Naive thymus-derived CD4-positive, alpha-beta T cell (primary cell): ENCODE measurements at regions of chr2 and their contacts with region 1.

Region 1: DNA sequence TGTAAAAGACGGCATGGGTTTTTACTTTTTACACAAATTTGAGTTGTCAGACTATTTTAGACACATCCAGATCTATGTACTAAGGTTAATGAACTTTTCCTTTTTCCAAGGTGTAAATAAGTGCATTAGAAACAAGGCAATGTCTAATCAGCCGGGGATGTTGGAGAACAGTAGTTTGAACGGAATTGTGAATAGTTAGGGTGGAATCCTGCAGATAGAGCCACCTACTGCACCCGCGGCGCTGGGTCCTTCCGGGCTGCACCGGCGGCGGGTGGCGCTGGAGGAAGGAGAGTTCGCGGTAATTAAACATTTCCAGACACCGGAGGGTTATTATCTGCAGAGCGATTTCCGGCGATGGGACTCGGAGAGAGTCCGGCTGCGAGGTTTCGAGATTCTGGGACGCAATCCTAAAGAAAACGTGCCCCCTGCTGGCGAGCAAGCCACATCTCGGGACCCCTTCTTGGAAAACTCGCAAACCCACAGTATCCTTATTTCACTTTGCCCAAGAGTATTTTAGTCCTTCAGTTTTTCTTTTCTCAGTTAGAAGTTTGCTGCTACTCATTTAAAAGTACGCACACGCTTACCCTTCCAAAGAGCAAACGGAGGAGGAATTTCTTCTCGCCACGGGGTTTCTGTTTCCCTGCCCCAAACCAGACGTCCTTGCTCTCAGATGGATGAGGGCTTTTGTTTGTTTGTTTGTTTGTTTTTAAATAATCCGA is 4.5 kb upstream of the OSR1 start:
- DNase-seq: peak in 3 of 9 donors; percentile 41 to 46 (median 44)
- ATAC-seq: peak; percentile 38
- H3K4me3 ChIP-seq: peak overlapping the region; percentile 79
- H3K4me3 Mint-ChIP-seq: peak overlapping the region; percentile 88 to 99 (median 94)
- H3K27ac ChIP-seq: no peak overlapping the region
- H3K27ac Mint-ChIP-seq: peak overlapping the region in 8 of 9 donors; percentile 40 to 90 (median 80)
- H3K4me1 ChIP-seq: peaks cover 7 to 20% of the 10 kb centered on the region in 2 donors
- H3K4me1 Mint-ChIP-seq: peaks cover 19 to 40% (median 35%) of the 10 kb centered on the region in 7 donors
- H3K27me3 ChIP-seq: peaks cover 19 to 30% of the 10 kb centered on the region in 2 donors
- H3K27me3 Mint-ChIP-seq: peaks cover 39 to 97% (median 43%) of the 10 kb centered on the region in 5 donors

Region 2: GRCh38 chr2:18520451-18521425 is 842.2 kb before region 1 on chr2:
- CTCF ChIA-PET with region 1: no interaction called
- POLR2A ChIA-PET with region 1: no interaction called
- intact Hi-C with region 1: loop called (anchors 1 kb)
- DNase-seq: peak; percentile 39 to 72 (median 65)
- ATAC-seq: peak; percentile 78
- H3K4me3 ChIP-seq: no peak overlapping the region
- H3K4me3 Mint-ChIP-seq: no peak overlapping the region
- H3K27ac ChIP-seq: no peak overlapping the region
- H3K27ac Mint-ChIP-seq: no peak overlapping the region
- H3K4me1 ChIP-seq: no peaks in the 10 kb centered on the region
- H3K4me1 Mint-ChIP-seq: no peaks in the 10 kb centered on the region
- H3K27me3 ChIP-seq: no peaks in the 10 kb centered on the region
- H3K27me3 Mint-ChIP-seq: peaks cover 9 to 19% (median 17%) of the 10 kb centered on the region in 5 donors

Region 3: DNA sequence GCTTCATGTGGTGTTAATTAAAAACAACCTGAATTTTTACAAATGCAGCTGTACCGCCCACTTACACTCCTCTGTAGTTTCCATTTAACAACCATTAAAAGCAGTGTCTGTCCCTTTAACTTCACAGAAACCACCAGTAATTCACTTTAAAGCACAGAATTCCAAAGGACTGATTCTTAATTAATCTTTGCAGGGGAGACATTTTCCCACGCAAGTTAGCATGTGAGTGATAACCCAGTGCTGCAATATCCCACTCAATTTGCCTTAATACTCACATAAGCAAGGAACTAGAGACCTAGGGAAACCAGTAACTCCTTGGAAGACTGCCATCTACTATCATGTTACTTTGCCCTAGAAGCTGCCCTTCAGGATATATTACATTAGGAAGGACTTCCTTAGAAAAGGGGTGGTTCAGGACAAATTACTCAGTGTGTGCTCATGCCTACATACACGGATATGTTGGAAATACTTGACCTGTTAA is 106.8 kb before region 1 on chr2:
- CTCF ChIA-PET with region 1: no interaction called
- POLR2A ChIA-PET with region 1: no interaction called
- intact Hi-C with region 1: no loop called
- DNase-seq: no peak
- ATAC-seq: no peak
- H3K4me3 ChIP-seq: no peak overlapping the region
- H3K4me3 Mint-ChIP-seq: no peak overlapping the region
- H3K27ac ChIP-seq: no peak overlapping the region
- H3K27ac Mint-ChIP-seq: no peak overlapping the region
- H3K4me1 ChIP-seq: no peaks in the 10 kb centered on the region
- H3K4me1 Mint-ChIP-seq: no peaks in the 10 kb centered on the region
- H3K27me3 ChIP-seq: no peaks in the 10 kb centered on the region
- H3K27me3 Mint-ChIP-seq: peaks cover 0 to 7% (median 0%) of the 10 kb centered on the region in 5 donors

Region 4: GRCh38 chr2:19474128-19474527 is 111.2 kb after region 1 on chr2:
- CTCF ChIA-PET with region 1: no interaction called
- POLR2A ChIA-PET with region 1: no interaction called
- intact Hi-C with region 1: loop called in 1 of 2 experiments (anchors 5 kb)
- DNase-seq: peak in 8 of 9 donors; percentile 30 to 84 (median 75)
- ATAC-seq: peak; percentile 95
- H3K4me3 ChIP-seq: no peak overlapping the region
- H3K4me3 Mint-ChIP-seq: peak overlapping the region; percentile 24 to 75 (median 56)
- H3K27ac ChIP-seq: no peak overlapping the region
- H3K27ac Mint-ChIP-seq: peak overlapping the region in 7 of 9 donors; percentile 14 to 84 (median 22)
- H3K4me1 ChIP-seq: peaks cover 8 to 19% of the 10 kb centered on the region in 2 donors
- H3K4me1 Mint-ChIP-seq: peaks cover 11 to 32% (median 25%) of the 10 kb centered on the region in 7 donors
- H3K27me3 ChIP-seq: no peaks in the 10 kb centered on the region
- H3K27me3 Mint-ChIP-seq: peaks cover 33 to 66% (median 43%) of the 10 kb centered on the region in 5 donors

Region 5: DNA sequence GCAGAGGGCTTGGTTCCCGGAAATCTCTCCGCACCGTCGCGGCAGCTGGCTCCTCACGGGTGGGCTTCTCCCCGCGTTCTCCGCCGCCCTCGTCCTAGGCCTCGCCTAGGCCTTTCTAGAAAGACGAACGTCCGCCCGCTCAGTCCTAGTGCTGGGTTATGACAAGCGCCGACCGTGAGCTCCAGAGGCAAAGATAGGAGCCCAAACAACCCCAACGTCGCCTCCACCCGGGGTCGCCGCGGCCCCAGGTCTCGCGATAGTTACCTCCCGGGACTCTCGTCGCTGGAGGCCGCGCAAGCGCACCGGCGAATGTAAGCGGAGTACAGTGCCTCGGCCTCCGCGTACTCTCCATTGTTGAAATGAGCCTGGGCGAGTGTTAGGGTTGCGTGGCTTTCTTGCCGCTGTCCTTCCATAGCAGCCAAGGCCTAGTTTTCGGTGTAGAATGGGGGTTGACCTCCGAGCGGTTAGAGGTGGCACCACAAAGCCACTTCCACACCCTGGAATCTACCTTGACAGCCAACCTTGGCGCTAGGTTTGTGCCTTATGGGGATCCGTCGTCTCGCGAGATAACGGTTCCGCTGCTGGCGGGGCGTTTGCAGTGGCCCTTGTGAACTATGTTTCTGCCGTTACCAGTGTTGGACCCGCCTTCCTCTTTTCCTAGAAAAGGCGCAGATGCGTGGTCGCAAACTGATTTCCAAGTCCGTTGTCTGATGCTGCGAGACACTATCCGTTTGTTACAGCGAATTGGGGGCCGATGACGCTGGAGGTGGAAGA is 538.7 kb after region 1 on chr2 and contains the start of gene TTC32:
- CTCF ChIA-PET with region 1: no interaction called
- POLR2A ChIA-PET with region 1: no interaction called
- intact Hi-C with region 1: loop called in 1 of 2 experiments (anchors 5 kb)
- DNase-seq: peak; percentile 90 to 98 (median 96)
- ATAC-seq: peak; percentile 91
- H3K4me3 ChIP-seq: peak within 1 kb of the TSS; percentile 95
- H3K4me3 Mint-ChIP-seq: peak within 1 kb of the TSS; percentile 84 to 99 (median 96)
- H3K27ac ChIP-seq: peak within 1 kb of the TSS; percentile 83
- H3K27ac Mint-ChIP-seq: peak within 1 kb of the TSS; percentile 93 to 100 (median 99)
- H3K4me1 ChIP-seq: peaks cover 15 to 23% of the 10 kb centered on the region in 2 donors
- H3K4me1 Mint-ChIP-seq: peaks cover 24 to 35% (median 31%) of the 10 kb centered on the region in 7 donors
- H3K27me3 ChIP-seq: no peaks in the 10 kb centered on the region
- H3K27me3 Mint-ChIP-seq: peaks cover 8 to 19% (median 13%) of the 10 kb centered on the region in 5 donors
- total RNA-seq, gene TTC32: 23.1 to 58.0 (median 44.9) TPM

Region 6: DNA sequence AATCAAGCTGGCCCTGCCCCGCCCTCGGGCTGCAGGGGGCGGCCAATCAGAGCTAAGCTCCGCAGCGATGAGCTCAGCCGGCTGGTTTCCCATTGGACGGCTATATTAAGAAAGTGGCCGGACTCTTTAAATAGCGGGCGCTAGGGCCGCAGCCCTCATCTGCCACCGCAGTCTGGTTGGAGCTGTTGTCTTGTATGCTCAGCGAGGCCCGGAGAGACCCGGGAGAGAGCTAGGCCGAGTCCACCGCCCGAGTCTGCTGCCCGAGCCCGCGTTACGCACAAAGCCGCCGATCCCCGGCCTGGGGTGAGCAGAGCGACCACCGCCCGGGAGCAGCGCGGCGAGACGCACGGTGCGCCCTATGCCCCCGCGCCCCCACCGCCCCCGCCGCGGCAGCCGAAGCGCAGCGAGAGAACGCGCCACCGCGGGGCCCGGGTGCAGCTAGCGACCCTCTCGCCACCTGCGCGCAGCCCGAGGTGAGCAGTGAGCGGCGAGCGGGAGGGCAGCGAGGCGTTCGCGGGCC is 1084.1 kb after region 1 on chr2 and contains the start of gene RHOB:
- CTCF ChIA-PET with region 1: no interaction called
- POLR2A ChIA-PET with region 1: no interaction called
- intact Hi-C with region 1: loop called in 1 of 2 experiments (anchors 2 kb)
- DNase-seq: peak; percentile 75 to 90 (median 82)
- ATAC-seq: peak; percentile 97
- H3K4me3 ChIP-seq: peak within 1 kb of the TSS; percentile 71
- H3K4me3 Mint-ChIP-seq: peak within 1 kb of the TSS; percentile 77 to 88 (median 81)
- H3K27ac ChIP-seq: peak within 1 kb of the TSS; percentile 59
- H3K27ac Mint-ChIP-seq: peak within 1 kb of the TSS in 5 of 9 donors; percentile 11 to 81 (median 51)
- H3K4me1 ChIP-seq: peaks cover 6 to 12% of the 10 kb centered on the region in 2 donors
- H3K4me1 Mint-ChIP-seq: peaks cover 0 to 7% (median 4%) of the 10 kb centered on the region in 7 donors
- H3K27me3 ChIP-seq: peaks cover 0 to 3% of the 10 kb centered on the region in 2 donors
- H3K27me3 Mint-ChIP-seq: peaks cover 0 to 68% (median 13%) of the 10 kb centered on the region in 5 donors
- total RNA-seq, gene RHOB: 2.5 to 244 (median 11.7) TPM